ENCODE measurements at regions of chr1 and their contacts with region 1.

Region 1: DNA sequence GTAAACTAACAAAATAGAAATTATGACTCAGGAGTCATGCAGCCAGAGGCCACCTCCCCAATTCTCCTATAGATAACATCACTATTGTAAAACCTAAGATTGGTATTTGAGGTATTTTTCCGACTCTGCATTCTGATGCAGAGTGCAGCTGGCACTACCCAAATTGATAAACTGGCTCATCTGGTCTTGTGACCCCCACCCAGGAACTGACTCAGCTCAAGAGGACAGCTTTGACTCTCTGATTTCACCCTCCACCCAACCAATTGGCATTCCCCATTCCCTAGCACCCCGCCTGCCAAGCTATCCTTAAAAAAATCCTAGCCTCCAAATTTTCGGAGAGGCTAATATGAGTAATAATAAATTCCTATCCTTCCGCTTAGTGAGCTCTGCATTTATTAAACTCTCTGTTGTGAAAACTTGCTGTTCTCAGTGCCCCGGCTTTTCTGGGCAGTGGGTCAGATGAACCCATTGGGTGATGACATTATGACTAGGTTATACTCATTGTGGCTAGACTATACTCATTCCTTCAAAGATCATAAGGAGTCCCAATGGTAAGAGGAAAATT is 39.4 kb upstream of the EPS15 start:
- DNase-seq: no peak
- H3K4me3 Mint-ChIP-seq: no peak overlapping the region
- H3K27ac Mint-ChIP-seq: peak overlapping the region; percentile 83
- H3K4me1 Mint-ChIP-seq: peaks cover 23% of the 10 kb centered on the region
- H3K27me3 Mint-ChIP-seq: peaks cover 2% of the 10 kb centered on the region

Region 2: GRCh38 chr1:51247022-51247421 is 311.4 kb before region 1 on chr1:
- intact Hi-C with region 1: no loop called
- DNase-seq: no peak
- H3K4me3 Mint-ChIP-seq: no peak overlapping the region
- H3K27ac Mint-ChIP-seq: no peak overlapping the region
- H3K4me1 Mint-ChIP-seq: peaks cover 36% of the 10 kb centered on the region
- H3K27me3 Mint-ChIP-seq: no peaks in the 10 kb centered on the region

Region 3: DNA sequence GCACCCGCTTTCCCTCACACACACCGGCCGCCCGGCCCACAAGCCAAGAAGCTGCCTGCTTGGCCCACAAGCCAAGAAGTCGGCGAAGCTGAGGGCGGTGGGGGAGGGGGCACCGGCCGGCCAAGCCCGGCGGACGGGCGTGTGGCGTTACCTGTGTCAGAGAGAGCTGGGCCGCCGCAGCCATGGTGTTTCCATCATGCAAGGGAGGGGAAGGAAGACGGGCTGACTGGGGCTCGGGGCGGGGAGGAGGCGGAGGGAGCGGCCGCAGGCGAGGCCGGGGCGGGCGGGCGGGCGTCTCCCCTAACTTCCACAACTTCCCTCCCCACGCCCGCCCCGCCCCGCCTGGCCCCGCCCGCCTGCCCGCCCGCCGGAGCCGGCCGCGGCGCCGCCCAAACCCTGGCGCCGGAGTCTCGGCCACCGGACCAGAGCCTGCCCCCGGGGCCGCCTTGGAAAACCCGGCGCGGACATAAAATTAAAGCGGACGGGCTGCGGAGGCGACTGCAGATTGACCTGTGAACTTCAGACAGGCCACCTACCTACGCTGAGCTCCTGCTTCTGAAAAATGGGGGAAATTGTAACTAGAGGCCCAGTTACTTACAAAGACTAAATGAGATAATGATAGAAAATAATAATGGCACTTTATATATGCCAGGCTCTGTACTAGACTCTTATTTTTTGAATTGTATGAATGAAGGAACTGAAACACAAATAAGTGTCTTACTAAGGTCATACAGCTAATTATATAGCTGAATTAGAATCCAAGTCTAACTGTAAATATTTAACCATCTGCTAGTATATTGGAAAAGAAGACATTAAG is 39.2 kb before region 1 on chr1 and contains the start of gene EPS15:
- intact Hi-C with region 1: no loop called
- DNase-seq: peak; percentile 83
- H3K4me3 Mint-ChIP-seq: peak within 1 kb of the TSS; percentile 93
- H3K27ac Mint-ChIP-seq: peak within 1 kb of the TSS; percentile 88
- H3K4me1 Mint-ChIP-seq: peaks cover 51% of the 10 kb centered on the region
- H3K27me3 Mint-ChIP-seq: no peaks in the 10 kb centered on the region
- total RNA-seq, gene EPS15: 50.1 and 54.1 TPM in 2 replicates

Region 4: DNA sequence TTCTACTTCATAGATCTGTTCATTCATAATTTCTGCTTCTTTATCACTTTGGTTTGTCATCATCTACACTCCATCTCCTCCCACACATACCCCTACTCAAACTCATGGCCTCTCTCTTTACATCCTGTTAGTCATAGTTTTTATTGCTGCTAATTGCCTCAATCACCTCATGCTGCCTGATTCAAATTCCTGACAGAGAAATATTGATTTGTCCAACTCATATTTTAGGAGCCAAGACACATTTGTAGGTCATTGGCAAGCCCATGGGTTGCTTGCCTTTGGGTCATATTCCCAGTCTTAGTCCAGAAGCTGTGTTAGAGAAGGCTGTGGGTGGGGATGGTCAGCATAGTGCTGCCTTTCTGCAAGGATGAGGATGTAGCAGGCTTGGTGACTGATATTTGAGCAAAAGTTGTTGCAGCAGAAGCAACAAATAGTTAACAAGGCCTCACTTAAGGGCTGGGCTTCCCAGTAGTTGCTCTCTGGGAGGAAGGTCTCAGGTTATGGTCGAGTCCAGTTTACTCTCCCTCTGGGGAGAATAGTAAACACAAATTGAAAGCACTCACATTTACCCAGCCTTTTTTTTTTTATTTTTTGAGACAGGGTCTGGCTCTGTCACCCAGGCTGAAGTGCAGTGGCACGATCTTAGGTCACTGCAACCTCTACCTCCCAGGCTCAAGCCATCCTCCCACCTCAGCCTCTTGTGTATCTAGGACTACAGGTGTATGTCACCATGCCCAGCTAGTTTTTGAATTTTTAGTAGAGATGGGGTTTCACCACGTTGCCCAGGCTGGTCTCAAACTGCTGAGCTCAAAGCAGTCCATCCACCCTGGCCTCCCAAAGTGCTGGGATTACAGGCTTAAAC is 16.9 kb before region 1 on chr1:
- intact Hi-C with region 1: loop called (anchors 1 kb)
- DNase-seq: no peak
- H3K4me3 Mint-ChIP-seq: no peak overlapping the region
- H3K27ac Mint-ChIP-seq: peak overlapping the region; percentile 67
- H3K4me1 Mint-ChIP-seq: peaks cover 31% of the 10 kb centered on the region
- H3K27me3 Mint-ChIP-seq: no peaks in the 10 kb centered on the region

Measured in activated T-helper 2 cell treated with anti-CD3 and anti-CD28 coated beads, Interferon-gamma antibody, Interleukin-2, Interleukin-4, amounts not matched to agents 10 μg/mL and 5 μg/mL and 100 μg/mL, durations not matched to agents 14 hours and 24 hours and 36 hours (primary cell).